ENCODE measurements at regions of chr15 and their contacts with region 1.

Region 1: DNA sequence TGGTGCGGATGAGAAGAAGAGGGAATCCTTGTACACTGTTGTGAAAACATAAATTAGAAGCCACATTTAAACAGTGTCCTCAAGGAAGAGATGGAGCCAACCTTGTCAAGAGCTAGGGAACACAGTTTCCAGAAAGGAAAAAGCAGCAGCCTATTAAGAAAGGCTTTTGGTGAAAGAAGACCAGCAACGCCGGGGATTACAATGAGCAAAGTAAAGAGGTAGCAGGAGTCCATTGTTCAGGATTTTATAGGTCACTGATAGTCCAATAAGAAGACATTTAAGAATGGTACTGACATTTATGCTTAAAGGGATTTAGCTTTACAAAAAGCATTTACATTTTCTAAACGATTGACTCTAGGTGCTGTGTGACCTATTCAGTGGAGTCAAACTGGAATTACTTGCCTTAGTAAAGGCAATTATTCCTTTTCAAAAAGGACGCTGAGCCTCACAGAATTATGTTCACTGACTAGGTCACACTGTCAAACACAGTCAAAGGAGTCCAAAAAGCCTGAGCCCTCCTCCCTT is 40.8 kb downstream of the CSNK1G1 start:
- DNase-seq: no peak
- H3K4me3 ChIP-seq: no peak overlapping the region
- H3K27ac ChIP-seq: no peak overlapping the region
- H3K4me1 ChIP-seq: no peaks in the 10 kb centered on the region
- H3K27me3 ChIP-seq: no peaks in the 10 kb centered on the region

Region 2: GRCh38 chr15:64501396-64501715 is 186.2 kb after region 1 on chr15:
- CTCF ChIA-PET with region 1: no interaction called
- POLR2A ChIA-PET with region 1: no interaction called
- DNase-seq: no peak
- H3K4me3 ChIP-seq: no peak overlapping the region
- H3K27ac ChIP-seq: peak overlapping the region in 1 of 2 experiments; percentile 72
- H3K4me1 ChIP-seq: peaks cover 25 to 47% (median 32%) of the 10 kb centered on the region in 4 experiments
- H3K27me3 ChIP-seq: no peaks in the 10 kb centered on the region

Region 3: DNA sequence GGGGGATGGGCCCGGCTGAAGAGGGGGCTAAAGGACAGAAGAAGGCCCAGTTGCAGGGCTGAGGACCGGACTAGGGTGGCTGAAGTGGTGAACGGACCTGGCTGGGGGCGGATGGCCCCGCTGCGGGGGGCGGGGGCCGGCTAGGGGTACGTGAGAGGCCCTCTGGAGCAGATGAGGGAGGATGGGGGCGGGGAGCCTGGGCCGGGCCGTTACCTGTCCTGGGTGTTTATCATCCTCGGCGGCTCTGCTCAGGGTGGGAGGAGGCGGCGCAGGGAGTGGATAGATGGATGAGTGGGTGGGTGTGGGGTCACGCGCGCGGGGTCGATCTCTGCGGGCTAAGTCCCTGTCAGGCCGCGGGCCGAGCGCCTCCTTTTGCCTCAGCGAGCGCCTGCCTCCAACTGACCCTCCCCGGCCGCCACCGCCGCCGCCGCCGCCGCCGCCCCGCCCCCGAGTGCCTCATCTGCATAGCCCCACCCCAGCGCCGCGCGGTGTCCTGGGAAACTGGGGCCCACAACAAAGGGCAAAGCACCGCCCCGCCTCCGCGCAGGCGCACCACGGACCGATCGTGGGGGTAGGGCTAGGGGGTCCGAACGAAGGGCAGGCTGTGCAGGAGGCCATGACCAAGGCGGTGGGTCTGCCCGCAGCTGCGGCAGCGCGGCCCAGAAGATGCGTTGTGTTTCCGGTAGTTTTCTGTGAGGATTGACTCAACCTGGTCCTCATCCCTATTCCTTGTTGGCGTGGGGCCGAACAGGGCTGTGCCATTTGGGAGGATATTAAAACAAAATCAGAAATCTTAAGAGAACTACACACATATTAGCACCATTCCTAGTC is 387.8 kb after region 1 on chr15:
- CTCF ChIA-PET with region 1: no interaction called
- POLR2A ChIA-PET with region 1: interaction called, 10 read pairs
- DNase-seq: peak; percentile 87 to 92 (median 92)
- H3K4me3 ChIP-seq: peak overlapping the region; percentile 70 to 88 (median 85)
- H3K27ac ChIP-seq: peak overlapping the region; percentile 74 to 93
- H3K4me1 ChIP-seq: peaks cover 27 to 55% (median 45%) of the 10 kb centered on the region in 4 experiments
- H3K27me3 ChIP-seq: no peaks in the 10 kb centered on the region